ENCODE measurements at regions of chr14 and their contacts with region 1.

Region 1: GRCh38 chr14:51996148-51996746 is 6.9 kb downstream of the RTRAF start:
- DNase-seq: no peak
- H3K4me3 Mint-ChIP-seq: no peak overlapping the region
- H3K27ac Mint-ChIP-seq: no peak overlapping the region
- H3K4me1 Mint-ChIP-seq: peaks cover 26% of the 10 kb centered on the region
- H3K27me3 Mint-ChIP-seq: no peaks in the 10 kb centered on the region

Region 2: GRCh38 chr14:52131640-52132320 is 135.5 kb after region 1 on chr14:
- CTCF ChIA-PET with region 1: interaction called, 7 read pairs
- POLR2A ChIA-PET with region 1: no interaction called
- intact Hi-C with region 1: loop called (anchors 5 kb)
- DNase-seq: peak; percentile 53
- H3K4me3 Mint-ChIP-seq: no peak overlapping the region
- H3K27ac Mint-ChIP-seq: no peak overlapping the region
- H3K4me1 Mint-ChIP-seq: peaks cover 6% of the 10 kb centered on the region
- H3K27me3 Mint-ChIP-seq: peaks cover 3% of the 10 kb centered on the region